Activated B cell treated with CpG ODN at 0.5 μM for 24 hours (primary cell): ENCODE measurements at regions of chr12 and their contacts with region 1.

Region 1: DNA sequence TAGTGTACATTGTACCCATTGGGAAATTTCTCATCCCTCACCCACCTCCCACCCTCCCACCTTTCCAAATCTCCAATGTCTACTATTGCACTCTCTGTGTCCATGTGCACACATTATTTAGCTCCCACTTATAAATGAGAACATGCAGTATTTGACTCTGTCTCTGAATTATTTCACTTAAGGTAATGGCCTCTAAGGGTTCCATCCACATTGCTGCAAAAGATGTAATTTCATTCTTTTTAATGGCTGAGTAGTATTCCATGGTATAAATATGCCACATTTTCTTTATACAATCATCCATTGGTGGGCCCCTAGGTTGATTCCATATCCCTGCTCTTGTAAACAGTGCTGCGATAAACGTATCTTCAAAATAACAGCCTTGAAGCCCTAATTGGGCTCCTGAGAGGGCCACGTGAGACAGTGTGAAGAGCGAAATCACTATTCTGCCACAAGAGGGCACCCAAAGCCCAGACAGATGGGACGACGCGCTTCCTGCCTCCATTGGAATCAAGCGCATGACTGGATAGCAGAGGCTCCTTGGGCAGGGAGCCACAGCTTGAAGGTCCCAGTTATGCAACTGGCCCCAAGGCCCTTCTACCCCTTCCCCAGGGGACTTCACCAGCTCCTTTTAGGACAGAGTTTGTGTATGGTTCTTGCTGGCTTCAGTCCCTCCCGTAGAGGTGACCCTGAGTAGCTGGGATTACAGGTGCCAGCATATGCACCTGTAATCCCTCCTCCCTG is 21.3 kb upstream of the CD27 start:
- DNase-seq: no peak
- ATAC-seq: peak; percentile 32
- H3K4me3 Mint-ChIP-seq: peak overlapping the region; percentile 19
- H3K27ac Mint-ChIP-seq: peak overlapping the region; percentile 80
- H3K4me1 Mint-ChIP-seq: peaks cover 40% of the 10 kb centered on the region
- H3K27me3 Mint-ChIP-seq: peaks cover 2% of the 10 kb centered on the region
- CTCF ChIP-seq: no peak

Region 2: GRCh38 chr12:5154091-5154490 is 1269.3 kb before region 1 on chr12:
- CTCF ChIA-PET with region 1: no interaction called
- POLR2A ChIA-PET with region 1: no interaction called
- intact Hi-C with region 1: no loop called
- DNase-seq: no peak
- ATAC-seq: no peak
- H3K4me3 Mint-ChIP-seq: no peak overlapping the region
- H3K27ac Mint-ChIP-seq: no peak overlapping the region
- H3K4me1 Mint-ChIP-seq: no peaks in the 10 kb centered on the region
- H3K27me3 Mint-ChIP-seq: peaks cover 33% of the 10 kb centered on the region
- CTCF ChIP-seq: no peak

Region 3: DNA sequence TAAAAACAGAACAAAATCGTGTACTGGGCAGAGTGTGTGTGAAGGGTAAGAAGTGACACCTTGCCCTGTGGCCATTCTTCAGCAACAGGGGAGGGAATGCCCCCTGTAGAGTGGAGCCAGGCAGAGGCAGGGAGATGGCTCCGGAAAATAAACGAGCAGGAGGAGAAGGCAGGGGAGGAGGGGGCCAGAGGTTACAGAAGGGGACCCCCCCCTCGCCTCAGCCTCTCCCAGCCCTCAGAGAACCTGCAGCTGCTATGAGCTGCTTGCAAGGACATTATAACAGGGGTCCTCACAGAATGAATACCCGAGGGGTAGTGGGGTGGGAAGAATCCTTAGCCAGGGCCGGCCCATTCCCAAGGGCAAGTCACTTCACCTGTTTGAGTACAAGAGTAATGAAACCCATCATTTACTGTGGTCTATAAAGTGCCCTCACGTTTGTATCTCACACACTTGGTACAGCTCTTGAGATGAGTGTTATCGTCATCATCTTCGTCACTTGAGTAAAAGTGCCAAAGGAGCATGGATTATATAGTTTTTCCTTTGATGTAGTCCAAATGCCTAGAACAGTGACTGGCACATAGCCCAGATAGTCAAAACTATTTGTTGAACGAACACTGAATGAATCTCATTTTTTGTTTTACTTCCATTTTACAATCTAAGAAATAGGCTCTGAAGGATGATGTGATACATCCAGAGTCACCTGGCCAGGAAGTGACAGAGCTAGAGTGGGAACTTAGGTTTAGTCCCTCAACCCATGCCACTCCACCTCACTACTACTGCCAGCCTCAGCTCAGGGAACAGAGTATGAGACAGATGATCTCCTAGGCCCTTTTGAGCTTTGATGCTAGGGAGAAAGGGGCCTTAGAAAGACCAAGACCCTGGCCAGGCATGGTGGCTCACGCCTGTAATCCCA is 62.6 kb before region 1 on chr12:
- CTCF ChIA-PET with region 1: no interaction called
- POLR2A ChIA-PET with region 1: interaction called, 14 read pairs
- intact Hi-C with region 1: no loop called
- DNase-seq: no peak
- ATAC-seq: no peak
- H3K4me3 Mint-ChIP-seq: no peak overlapping the region
- H3K27ac Mint-ChIP-seq: no peak overlapping the region
- H3K4me1 Mint-ChIP-seq: peaks cover 6% of the 10 kb centered on the region
- H3K27me3 Mint-ChIP-seq: peaks cover 54% of the 10 kb centered on the region
- CTCF ChIP-seq: no peak

Region 4: DNA sequence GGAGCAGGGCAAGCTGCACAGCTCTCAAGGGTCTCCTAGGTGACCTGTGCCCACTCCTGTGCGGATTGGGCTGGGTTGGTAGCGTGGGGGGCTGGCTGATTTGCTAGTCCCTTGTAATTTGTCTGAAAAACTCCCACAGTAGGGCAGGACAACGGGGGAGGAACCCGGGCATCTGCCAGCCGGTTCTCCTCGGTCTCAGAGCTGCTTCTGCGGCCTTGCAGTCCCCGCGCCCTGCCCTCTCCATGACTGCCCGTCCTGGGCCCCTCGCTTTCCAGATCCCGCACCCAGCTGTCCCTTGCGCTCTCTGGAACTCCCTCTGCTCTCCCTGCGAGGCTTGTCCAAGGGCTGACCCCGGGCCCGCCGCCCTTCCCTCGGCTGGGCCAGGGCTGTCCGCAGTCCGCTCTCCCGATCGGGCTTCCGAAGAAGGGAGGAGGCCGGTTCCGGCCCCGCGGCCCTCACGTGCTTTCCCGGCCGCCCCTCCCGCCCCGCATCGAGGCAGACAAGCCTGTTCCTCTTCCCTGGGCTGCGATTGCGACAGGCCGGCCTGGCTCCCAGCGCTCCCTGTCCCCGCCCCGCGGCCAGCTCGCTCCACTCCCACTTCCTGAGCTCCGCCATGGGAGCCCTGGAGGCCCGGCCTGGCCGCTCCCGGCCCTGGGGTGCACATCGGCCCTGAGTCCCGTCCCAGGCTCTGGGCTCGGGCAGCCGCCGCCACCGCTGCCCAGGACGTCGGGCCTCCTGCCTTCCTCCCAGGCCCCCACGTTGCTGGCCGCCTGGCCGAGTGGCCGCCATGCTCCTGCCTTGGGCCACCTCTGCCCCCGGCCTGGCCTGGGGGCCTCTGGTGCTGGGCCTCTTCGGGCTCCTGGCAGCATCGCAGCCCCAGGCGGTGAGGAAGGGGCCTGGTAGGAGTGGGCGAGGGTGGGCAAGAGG is 39.6 kb before region 1 on chr12 and contains the start of gene LTBR:
- CTCF ChIA-PET with region 1: no interaction called
- POLR2A ChIA-PET with region 1: no interaction called
- intact Hi-C with region 1: no loop called
- DNase-seq: no peak
- ATAC-seq: no peak
- H3K4me3 Mint-ChIP-seq: peak within 1 kb of the TSS; percentile 44
- H3K27ac Mint-ChIP-seq: no peak within 1 kb of the TSS
- H3K4me1 Mint-ChIP-seq: peaks cover 8% of the 10 kb centered on the region
- H3K27me3 Mint-ChIP-seq: peaks cover 54% of the 10 kb centered on the region
- CTCF ChIP-seq: no peak
- total RNA-seq, gene LTBR: 0.33 TPM in 1 of 2 replicates, not detected in the other

Region 5: DNA sequence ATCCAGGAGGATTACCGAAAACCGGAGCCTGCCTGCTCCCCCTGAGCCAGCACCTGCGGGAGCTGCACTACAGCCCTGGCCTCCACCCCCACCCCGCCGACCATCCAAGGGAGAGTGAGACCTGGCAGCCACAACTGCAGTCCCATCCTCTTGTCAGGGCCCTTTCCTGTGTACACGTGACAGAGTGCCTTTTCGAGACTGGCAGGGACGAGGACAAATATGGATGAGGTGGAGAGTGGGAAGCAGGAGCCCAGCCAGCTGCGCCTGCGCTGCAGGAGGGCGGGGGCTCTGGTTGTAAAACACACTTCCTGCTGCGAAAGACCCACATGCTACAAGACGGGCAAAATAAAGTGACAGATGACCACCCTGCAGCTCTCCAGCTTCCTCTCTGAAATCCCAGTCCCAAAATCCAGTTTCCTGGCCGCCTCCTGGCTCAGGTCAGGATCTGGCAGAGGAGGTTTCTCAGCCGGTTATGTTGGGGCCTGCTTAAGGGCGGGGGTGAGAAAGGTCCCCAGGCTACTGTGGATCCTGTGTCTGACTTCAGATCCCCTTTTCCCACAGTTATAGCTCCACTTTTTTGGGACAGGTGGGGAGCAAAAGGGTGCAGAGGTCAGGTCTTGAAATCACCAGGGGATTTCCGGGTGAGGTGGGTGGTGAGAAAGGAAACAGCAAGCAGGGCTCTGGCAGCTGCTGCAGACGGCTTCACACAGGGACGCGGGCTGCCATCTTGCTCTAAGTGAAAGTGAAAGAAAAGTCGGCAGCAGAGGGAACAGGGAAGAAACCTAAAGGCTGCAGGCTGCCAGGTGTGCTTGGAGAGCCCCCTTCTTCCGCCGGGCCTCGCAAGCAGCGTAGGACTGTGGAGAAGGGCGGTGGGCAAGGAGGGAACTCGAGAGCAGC is 28.2 kb after region 1 on chr12 and contains the start of gene TAPBPL:
- CTCF ChIA-PET with region 1: interaction called, 9 read pairs
- POLR2A ChIA-PET with region 1: interaction called, 109 read pairs
- intact Hi-C with region 1: loop called (anchors 1 kb)
- DNase-seq: peak; percentile 62
- ATAC-seq: peak; percentile 86
- H3K4me3 Mint-ChIP-seq: peak within 1 kb of the TSS; percentile 97
- H3K27ac Mint-ChIP-seq: peak within 1 kb of the TSS; percentile 99
- H3K4me1 Mint-ChIP-seq: peaks cover 58% of the 10 kb centered on the region
- H3K27me3 Mint-ChIP-seq: no peaks in the 10 kb centered on the region
- CTCF ChIP-seq: no peak
- total RNA-seq, gene TAPBPL: 52.5 and 64.0 TPM in 2 replicates

Region 6: GRCh38 chr12:6533923-6534694 is 110.7 kb after region 1 on chr12 and contains the start of gene GAPDH:
- CTCF ChIA-PET with region 1: interaction called, 111 read pairs
- POLR2A ChIA-PET with region 1: interaction called, 71 read pairs
- intact Hi-C with region 1: loop called (anchors 1 kb)
- DNase-seq: peak; percentile 75
- ATAC-seq: peak; percentile 70
- H3K4me3 Mint-ChIP-seq: peak within 1 kb of the TSS; percentile 94
- H3K27ac Mint-ChIP-seq: peak within 1 kb of the TSS; percentile 93
- H3K4me1 Mint-ChIP-seq: peaks cover 47% of the 10 kb centered on the region
- H3K27me3 Mint-ChIP-seq: no peaks in the 10 kb centered on the region
- CTCF ChIP-seq: no peak
- total RNA-seq, gene GAPDH: 1,003 and 1,033 TPM in 2 replicates

Region 7: GRCh38 chr12:6554168-6555017 is 131.0 kb after region 1 on chr12:
- CTCF ChIA-PET with region 1: interaction called, 4 read pairs
- POLR2A ChIA-PET with region 1: no interaction called
- intact Hi-C with region 1: loop called (anchors 1 kb)
- DNase-seq: peak; percentile 61
- ATAC-seq: peak; percentile 77
- H3K4me3 Mint-ChIP-seq: peak overlapping the region; percentile 84
- H3K27ac Mint-ChIP-seq: peak overlapping the region; percentile 70
- H3K4me1 Mint-ChIP-seq: peaks cover 45% of the 10 kb centered on the region
- H3K27me3 Mint-ChIP-seq: no peaks in the 10 kb centered on the region
- CTCF ChIP-seq: peak; percentile 43

Region 8: GRCh38 chr12:7970475-7971252 is 1547.2 kb after region 1 on chr12:
- CTCF ChIA-PET with region 1: no interaction called
- POLR2A ChIA-PET with region 1: no interaction called
- intact Hi-C with region 1: loop called (anchors 10 kb)
- DNase-seq: peak; percentile 73
- ATAC-seq: peak; percentile 93
- H3K4me3 Mint-ChIP-seq: peak overlapping the region; percentile 81
- H3K27ac Mint-ChIP-seq: peak overlapping the region; percentile 90
- H3K4me1 Mint-ChIP-seq: peaks cover 32% of the 10 kb centered on the region
- H3K27me3 Mint-ChIP-seq: no peaks in the 10 kb centered on the region
- CTCF ChIP-seq: no peak